ENCODE measurements at regions of chr9 and their contacts with region 1.

Region 1: DNA sequence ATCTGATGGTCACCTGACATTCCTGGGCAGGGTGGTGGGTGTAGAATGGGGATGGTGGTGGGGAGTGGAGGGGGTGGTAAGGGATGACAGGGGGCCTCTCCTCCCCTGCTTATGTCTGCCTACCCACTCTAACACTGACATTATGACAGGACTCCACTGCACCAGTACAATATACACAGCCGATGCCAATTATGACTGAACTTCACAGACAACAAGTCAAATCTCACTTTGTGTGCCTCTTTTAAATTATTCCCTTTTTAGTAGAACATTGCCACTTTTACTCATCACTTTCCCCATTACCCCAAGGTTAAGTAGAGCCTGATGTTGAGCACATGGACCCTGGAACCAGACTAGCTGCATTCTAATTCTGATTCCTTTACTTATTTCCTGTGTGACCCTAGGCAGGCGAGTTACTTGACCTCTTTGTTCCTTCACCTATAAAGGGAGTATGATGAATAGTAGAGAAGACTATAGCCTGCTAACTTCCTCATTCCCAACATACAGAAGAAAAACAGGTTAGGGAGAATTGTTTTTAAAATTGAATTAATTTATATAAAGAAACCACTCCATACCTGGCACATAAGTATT is 464.7 kb downstream of the DMRT2 start:
- DNase-seq: no peak
- ATAC-seq: no peak
- H3K4me3 ChIP-seq: no peak overlapping the region
- H3K27ac ChIP-seq: no peak overlapping the region
- H3K4me1 ChIP-seq: no peaks in the 10 kb centered on the region
- H3K27me3 ChIP-seq: no peaks in the 10 kb centered on the region

Region 2: GRCh38 chr9:1460143-1460769 is 54.6 kb before region 1 on chr9:
- intact Hi-C with region 1: no loop called
- DNase-seq: no peak
- ATAC-seq: no peak
- H3K4me3 ChIP-seq: no peak overlapping the region
- H3K27ac ChIP-seq: no peak overlapping the region
- H3K4me1 ChIP-seq: no peaks in the 10 kb centered on the region
- H3K27me3 ChIP-seq: peaks cover 0 to 2% of the 10 kb centered on the region in 2 donors

Region 3: DNA sequence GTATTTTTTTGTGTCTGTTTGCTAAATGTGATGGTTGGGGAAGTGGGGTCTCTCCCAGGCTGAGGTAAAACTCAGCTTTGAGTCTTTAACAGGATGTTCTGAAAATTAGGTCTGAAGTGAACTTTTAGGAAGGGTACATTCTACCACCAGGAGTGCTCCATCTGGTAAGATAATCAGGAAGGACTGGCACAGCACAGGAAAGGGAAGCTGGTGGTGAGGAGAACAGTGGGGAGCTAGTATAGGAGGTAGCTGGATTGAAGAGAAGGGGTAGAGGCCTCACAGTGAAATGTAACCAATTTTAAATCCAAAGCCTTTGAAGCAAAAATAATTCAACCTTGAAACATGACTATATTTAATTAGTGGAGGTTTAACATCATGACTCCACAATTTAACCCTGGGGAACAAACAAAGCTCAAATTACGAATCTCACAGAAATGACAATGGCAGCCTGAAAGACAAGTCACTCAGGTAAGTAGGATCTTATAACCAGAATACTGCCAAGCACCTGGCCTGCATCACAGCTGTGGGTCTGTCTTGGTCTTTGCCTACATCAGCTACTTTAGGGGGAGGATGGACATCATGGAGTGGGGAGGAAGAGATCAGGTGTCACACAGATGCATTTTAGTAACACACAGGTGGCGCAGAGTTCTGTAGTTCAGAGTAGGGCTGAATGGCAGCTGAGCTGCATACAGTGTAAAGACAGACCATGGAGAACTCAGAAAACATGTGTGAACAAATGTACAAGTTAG is 19.4 kb before region 1 on chr9:
- intact Hi-C with region 1: loop called in 1 of 2 experiments (anchors 1 kb)
- DNase-seq: no peak
- ATAC-seq: no peak
- H3K4me3 ChIP-seq: no peak overlapping the region
- H3K27ac ChIP-seq: no peak overlapping the region
- H3K4me1 ChIP-seq: no peaks in the 10 kb centered on the region
- H3K27me3 ChIP-seq: no peaks in the 10 kb centered on the region